Activated CD8-positive, alpha-beta memory T cell treated with anti-CD3 and anti-CD28 coated beads, Interleukin-2, amount 10 ng/mL, durations not matched to agents 7 days and 5 days (primary cell): ENCODE measurements at regions of chr1 and their contacts with region 1.

Region 1: GRCh38 chr1:117674521-117675397 is 68.9 kb downstream of the TENT5C start:
- DNase-seq: peak; percentile 75
- ATAC-seq: peak; percentile 86
- H3K4me3 Mint-ChIP-seq: no peak overlapping the region
- H3K27ac Mint-ChIP-seq: peak overlapping the region; percentile 70
- H3K4me1 Mint-ChIP-seq: peaks cover 30% of the 10 kb centered on the region
- H3K27me3 Mint-ChIP-seq: no peaks in the 10 kb centered on the region

Region 2: DNA sequence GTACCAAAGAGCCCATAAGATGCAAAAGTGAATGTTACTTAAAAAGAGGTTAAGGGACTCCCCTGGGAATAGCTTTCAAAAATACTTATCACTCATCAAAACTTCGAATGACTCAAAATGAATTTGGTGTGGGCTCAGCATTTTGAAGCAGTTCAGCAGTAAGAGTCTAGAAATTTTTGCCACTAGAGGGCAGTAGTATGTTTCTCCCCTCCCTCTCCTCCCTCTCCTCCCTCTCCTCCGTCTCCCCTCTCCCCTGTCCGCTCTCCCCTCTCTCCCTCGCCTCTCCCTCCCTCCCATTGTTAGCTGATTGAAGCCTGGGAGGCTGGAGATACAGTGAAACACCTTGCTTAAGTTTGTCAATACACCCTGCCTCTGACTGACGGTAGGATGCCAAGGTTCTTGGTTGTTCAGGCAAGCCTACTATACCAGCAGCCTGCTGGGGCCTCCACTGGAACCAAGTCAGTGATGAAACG is 139.7 kb before region 1 on chr1:
- CTCF ChIA-PET with region 1: interaction called, 113 read pairs
- DNase-seq: peak; percentile 55
- ATAC-seq: peak; percentile 92
- H3K4me3 Mint-ChIP-seq: no peak overlapping the region
- H3K27ac Mint-ChIP-seq: no peak overlapping the region
- H3K4me1 Mint-ChIP-seq: peaks cover 5% of the 10 kb centered on the region
- H3K27me3 Mint-ChIP-seq: no peaks in the 10 kb centered on the region

Region 3: GRCh38 chr1:117605774-117606648 is 68.7 kb before region 1 on chr1 and contains the start of gene TENT5C:
- CTCF ChIA-PET with region 1: interaction called, 50 read pairs
- DNase-seq: peak; percentile 99
- ATAC-seq: peak; percentile 85
- H3K4me3 Mint-ChIP-seq: peak within 1 kb of the TSS; percentile 100
- H3K27ac Mint-ChIP-seq: peak within 1 kb of the TSS; percentile 98
- H3K4me1 Mint-ChIP-seq: peaks cover 45% of the 10 kb centered on the region
- H3K27me3 Mint-ChIP-seq: peaks cover 18% of the 10 kb centered on the region
- total RNA-seq, gene TENT5C: 41.6 to 50.3 TPM

Region 4: GRCh38 chr1:117654493-117655219 is 20.1 kb before region 1 on chr1:
- CTCF ChIA-PET with region 1: interaction called, 56 read pairs
- DNase-seq: no peak
- ATAC-seq: peak; percentile 10
- H3K4me3 Mint-ChIP-seq: peak overlapping the region; percentile 22
- H3K27ac Mint-ChIP-seq: peak overlapping the region; percentile 95
- H3K4me1 Mint-ChIP-seq: peaks cover 88% of the 10 kb centered on the region
- H3K27me3 Mint-ChIP-seq: no peaks in the 10 kb centered on the region

Region 5: DNA sequence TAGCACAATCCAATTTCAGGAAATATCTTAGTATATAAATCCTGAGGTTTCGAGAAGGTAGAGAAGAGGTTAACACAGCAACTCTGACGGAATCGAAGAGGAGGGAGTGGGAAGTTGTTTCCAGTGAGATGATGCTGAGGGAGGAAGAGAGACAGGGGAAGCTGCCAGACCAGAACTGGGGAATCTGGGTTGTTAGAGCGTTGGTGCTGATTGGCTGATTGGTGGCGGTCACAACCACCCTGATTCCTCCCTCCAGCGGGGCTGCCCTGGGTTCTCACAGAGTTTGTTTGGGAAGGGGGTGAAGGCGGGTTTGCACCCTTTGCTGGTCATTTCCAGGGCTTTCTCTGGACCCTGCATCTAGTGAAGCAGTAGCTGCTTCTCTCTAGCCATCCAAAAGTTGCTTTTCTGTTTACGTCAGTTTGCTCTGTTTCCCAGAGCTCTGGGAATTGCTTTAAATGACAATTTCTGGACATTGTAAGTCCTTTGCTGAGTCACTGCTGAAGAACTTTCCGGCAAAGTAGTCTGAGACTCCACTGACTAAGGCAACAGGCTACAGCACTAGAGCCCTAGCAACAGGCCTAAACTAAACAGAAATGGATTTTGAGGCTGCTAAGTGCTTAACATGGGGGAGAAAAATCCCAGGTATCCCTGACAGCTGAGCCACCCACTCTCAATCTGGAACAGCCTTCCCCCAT is 21.2 kb after region 1 on chr1:
- CTCF ChIA-PET with region 1: interaction called, 11 read pairs
- DNase-seq: no peak
- ATAC-seq: no peak
- H3K4me3 Mint-ChIP-seq: no peak overlapping the region
- H3K27ac Mint-ChIP-seq: no peak overlapping the region
- H3K4me1 Mint-ChIP-seq: peaks cover 33% of the 10 kb centered on the region
- H3K27me3 Mint-ChIP-seq: peaks cover 9% of the 10 kb centered on the region

Region 6: DNA sequence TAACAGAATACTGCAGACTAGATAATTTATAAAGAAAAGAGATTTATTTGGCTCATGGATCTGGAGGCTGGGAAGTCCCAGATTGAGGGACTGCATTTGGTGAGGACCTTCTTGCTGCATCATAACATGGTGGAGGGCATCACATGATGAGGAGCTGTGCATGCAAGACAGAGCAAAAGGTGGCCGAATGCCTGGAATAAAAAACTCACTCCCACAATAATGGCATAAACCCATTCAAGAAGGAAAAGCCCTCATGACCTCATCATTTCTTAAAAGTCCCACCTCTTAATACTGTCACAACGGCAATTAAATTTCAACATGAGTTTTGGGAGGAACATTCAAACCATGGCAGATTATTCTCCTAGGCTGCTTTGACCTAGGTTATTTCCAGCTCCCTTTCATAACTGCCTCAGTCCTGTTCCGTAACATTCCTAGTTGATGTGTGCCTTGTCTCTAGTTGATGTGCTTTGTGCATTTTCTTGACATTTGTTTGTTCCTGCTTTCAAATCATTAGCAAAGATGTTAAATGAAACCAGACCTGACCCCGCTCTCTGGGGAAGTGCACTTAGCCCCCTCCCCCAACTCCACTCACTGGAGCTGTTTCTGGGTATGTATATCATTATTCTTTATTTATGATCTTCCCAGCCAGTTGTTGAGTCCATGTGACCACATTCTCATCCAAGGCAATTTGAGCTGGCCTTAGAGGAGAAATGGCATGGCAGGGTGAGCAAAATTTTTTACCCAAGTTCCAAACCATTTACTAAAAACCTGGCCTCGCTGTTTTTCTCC is 106.1 kb after region 1 on chr1:
- CTCF ChIA-PET with region 1: no interaction called
- DNase-seq: no peak
- ATAC-seq: no peak
- H3K4me3 Mint-ChIP-seq: no peak overlapping the region
- H3K27ac Mint-ChIP-seq: no peak overlapping the region
- H3K4me1 Mint-ChIP-seq: peaks cover 6% of the 10 kb centered on the region
- H3K27me3 Mint-ChIP-seq: peaks cover 4% of the 10 kb centered on the region